PC-9 (cell line): ENCODE measurements at regions of chr1 and their contacts with region 1.

Region 1: GRCh38 chr1:174894117-174894762 is 105.5 kb upstream of the CACYBP start:
- DNase-seq: no peak
- H3K4me3 ChIP-seq: no peak overlapping the region
- H3K27ac ChIP-seq: no peak overlapping the region
- H3K4me1 ChIP-seq: no peaks in the 10 kb centered on the region
- H3K27me3 ChIP-seq: no peaks in the 10 kb centered on the region
- CTCF ChIP-seq: no peak

Region 2: GRCh38 chr1:174800216-174800851 is 93.9 kb before region 1 on chr1:
- CTCF ChIA-PET with region 1: no interaction called
- POLR2A ChIA-PET with region 1: interaction called, 10 read pairs
- intact Hi-C with region 1: no loop called
- DNase-seq: no peak
- H3K4me3 ChIP-seq: peak overlapping the region; percentile 52; the same call in 1 of the 2 replicates
- H3K27ac ChIP-seq: peak overlapping the region; percentile 72; the same call in 1 of the 2 replicates
- H3K4me1 ChIP-seq: peaks cover 28% of the 10 kb centered on the region
- H3K27me3 ChIP-seq: no peaks in the 10 kb centered on the region
- CTCF ChIP-seq: no peak